CD4-positive, alpha-beta T cell (primary cell): ENCODE measurements at regions of chr1 and their contacts with region 1.

Region 1: DNA sequence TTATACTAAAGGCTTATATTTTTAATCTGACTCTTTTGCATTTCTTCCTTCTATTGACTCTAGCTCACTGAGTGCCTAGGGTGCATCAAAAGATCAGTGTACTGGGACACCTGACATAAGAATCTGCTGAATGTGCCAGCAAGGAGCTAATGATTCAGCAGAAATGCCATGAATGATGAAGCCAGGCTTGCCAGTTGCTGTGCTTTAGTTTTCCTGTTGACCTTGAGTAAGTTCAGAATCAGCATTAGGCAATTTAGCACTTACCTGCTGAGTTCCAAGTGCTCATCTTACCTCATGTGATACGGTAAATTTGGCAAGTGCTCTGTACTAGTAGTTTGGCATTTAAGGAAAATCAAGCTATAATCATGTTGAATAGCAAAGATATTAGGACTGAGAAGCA is 523.2 kb upstream of the B3GALT2 start:
- DNase-seq: no peak
- ATAC-seq: no peak
- H3K4me3 ChIP-seq: no peak overlapping the region
- H3K4me3 Mint-ChIP-seq: no peak overlapping the region
- H3K27ac ChIP-seq: no peak overlapping the region
- H3K27ac Mint-ChIP-seq: no peak overlapping the region
- H3K4me1 ChIP-seq: no peaks in the 10 kb centered on the region
- H3K4me1 Mint-ChIP-seq: peaks cover 17% of the 10 kb centered on the region
- H3K27me3 ChIP-seq: no peaks in the 10 kb centered on the region
- H3K27me3 Mint-ChIP-seq: no peaks in the 10 kb centered on the region
- CTCF ChIP-seq: no peak

Region 2: GRCh38 chr1:193569096-193569982 is 140.3 kb before region 1 on chr1:
- CTCF ChIA-PET with region 1: no interaction called
- POLR2A ChIA-PET with region 1: no interaction called
- intact Hi-C with region 1: no loop called
- DNase-seq: peak in 3 of 14 experiments; percentile 43 to 78 (median 63)
- ATAC-seq: peak; percentile 63
- H3K4me3 ChIP-seq: no peak overlapping the region
- H3K4me3 Mint-ChIP-seq: peak overlapping the region; percentile 57
- H3K27ac ChIP-seq: peak overlapping the region in 1 of 2 donors; percentile 30
- H3K27ac Mint-ChIP-seq: peak overlapping the region; percentile 66
- H3K4me1 ChIP-seq: peaks cover 2% of the 10 kb centered on the region
- H3K4me1 Mint-ChIP-seq: peaks cover 26% of the 10 kb centered on the region
- H3K27me3 ChIP-seq: no peaks in the 10 kb centered on the region
- H3K27me3 Mint-ChIP-seq: no peaks in the 10 kb centered on the region
- CTCF ChIP-seq: no peak

Region 3: DNA sequence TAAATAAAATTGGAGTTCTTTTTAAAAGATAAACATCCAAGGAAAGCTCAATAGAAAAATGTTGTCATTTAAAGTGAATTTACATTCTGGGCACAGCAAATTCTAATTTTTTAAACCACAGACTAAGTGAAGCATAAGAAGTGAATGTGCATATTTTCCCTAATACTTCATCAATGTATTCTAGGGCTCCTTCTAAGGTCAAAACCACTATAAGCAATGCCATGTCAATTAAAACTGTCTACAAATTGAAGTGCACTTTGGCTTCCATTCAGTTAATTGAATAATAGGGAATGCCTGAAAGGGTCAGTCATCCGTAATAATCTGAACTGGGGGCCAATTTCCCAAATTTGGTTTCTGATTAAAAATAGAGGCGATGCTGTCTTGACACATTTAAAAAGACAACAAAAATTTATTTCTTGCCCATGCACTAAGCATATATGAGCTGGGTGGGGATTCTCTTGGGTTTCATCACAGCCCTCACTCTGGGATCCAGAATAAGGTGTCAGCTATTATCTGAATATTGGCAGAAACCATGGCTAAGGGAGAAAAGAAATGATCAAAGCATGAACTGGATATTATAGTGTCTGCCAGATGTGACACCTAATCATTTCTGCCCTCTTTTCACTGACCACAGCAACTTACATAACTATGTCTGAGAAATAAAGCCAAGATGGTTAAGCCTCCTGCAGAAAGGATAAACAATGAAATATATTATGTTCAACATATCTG is 137.4 kb after region 1 on chr1:
- CTCF ChIA-PET with region 1: no interaction called
- POLR2A ChIA-PET with region 1: no interaction called
- intact Hi-C with region 1: no loop called
- DNase-seq: no peak
- ATAC-seq: no peak
- H3K4me3 ChIP-seq: no peak overlapping the region
- H3K4me3 Mint-ChIP-seq: no peak overlapping the region
- H3K27ac ChIP-seq: no peak overlapping the region
- H3K27ac Mint-ChIP-seq: no peak overlapping the region
- H3K4me1 ChIP-seq: no peaks in the 10 kb centered on the region
- H3K4me1 Mint-ChIP-seq: no peaks in the 10 kb centered on the region
- H3K27me3 ChIP-seq: no peaks in the 10 kb centered on the region
- H3K27me3 Mint-ChIP-seq: no peaks in the 10 kb centered on the region
- CTCF ChIP-seq: no peak

Region 4: GRCh38 chr1:194774535-194774934 is 1064.9 kb after region 1 on chr1:
- CTCF ChIA-PET with region 1: no interaction called
- POLR2A ChIA-PET with region 1: no interaction called
- intact Hi-C with region 1: loop called in 1 of 2 experiments (anchors 10 kb)
- DNase-seq: no peak
- ATAC-seq: no peak
- H3K4me3 ChIP-seq: no peak overlapping the region
- H3K4me3 Mint-ChIP-seq: no peak overlapping the region
- H3K27ac ChIP-seq: no peak overlapping the region
- H3K27ac Mint-ChIP-seq: no peak overlapping the region
- H3K4me1 ChIP-seq: no peaks in the 10 kb centered on the region
- H3K4me1 Mint-ChIP-seq: no peaks in the 10 kb centered on the region
- H3K27me3 ChIP-seq: no peaks in the 10 kb centered on the region
- H3K27me3 Mint-ChIP-seq: no peaks in the 10 kb centered on the region
- CTCF ChIP-seq: no peak